Caco-2 (cell line): ENCODE measurements at regions of chr20 and their contacts with region 1.

Region 1: DNA sequence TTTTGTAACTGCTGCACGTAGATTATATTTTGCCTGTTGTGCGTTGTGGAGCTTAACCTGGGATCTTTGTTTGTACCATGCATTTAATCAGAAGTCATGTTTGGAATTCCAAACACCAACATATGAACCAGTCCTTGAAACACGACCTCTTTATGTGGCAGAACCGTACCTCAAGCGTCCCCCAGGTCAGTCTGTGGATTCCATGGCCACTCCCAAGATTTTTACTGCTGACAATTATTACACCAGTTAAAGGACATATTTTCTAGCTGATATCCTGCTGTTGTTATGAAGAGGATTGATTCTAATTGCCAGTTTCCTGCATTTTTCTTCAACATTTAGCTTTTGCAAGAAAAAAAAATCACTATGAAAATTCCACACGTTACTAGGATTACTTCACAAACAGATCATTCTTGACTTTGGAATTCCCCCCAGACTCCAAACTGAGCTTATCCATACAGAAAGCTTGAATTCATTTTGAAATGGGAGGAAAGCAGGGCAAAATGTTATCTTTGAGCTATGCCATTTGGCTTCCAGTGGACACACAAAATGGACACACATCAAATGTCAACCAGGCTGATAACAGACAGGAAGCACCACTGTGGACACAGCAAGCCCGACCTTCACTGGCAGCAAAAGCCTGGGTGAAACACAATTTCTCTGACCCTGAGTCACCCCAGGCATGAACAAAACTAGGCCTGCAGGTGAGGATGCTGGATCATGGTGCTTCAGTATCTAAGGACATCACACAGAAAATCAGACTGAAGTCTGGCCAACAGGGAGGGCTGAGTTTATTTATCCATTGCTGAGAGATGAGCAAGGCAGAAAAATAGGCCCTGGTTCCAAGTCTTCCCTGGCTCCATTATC is 542.9 kb upstream of the JAG1 start:
- DNase-seq: peak; percentile 58 to 86
- H3K4me3 ChIP-seq: no peak overlapping the region
- H3K4me3 Mint-ChIP-seq: peak overlapping the region; percentile 36
- H3K27ac Mint-ChIP-seq: peak overlapping the region; percentile 74
- H3K4me1 ChIP-seq: peaks cover 53% of the 10 kb centered on the region
- H3K4me1 Mint-ChIP-seq: peaks cover 38% of the 10 kb centered on the region
- H3K27me3 ChIP-seq: no peaks in the 10 kb centered on the region
- H3K27me3 Mint-ChIP-seq: no peaks in the 10 kb centered on the region
- CTCF ChIP-seq: no peak

Region 2: GRCh38 chr20:9581509-9581908 is 1635.2 kb before region 1 on chr20:
- CTCF ChIA-PET with region 1: no interaction called
- POLR2A ChIA-PET with region 1: no interaction called
- intact Hi-C with region 1: no loop called
- DNase-seq: no peak
- H3K4me3 ChIP-seq: no peak overlapping the region
- H3K4me3 Mint-ChIP-seq: no peak overlapping the region
- H3K27ac Mint-ChIP-seq: no peak overlapping the region
- H3K4me1 ChIP-seq: no peaks in the 10 kb centered on the region
- H3K4me1 Mint-ChIP-seq: no peaks in the 10 kb centered on the region
- H3K27me3 ChIP-seq: no peaks in the 10 kb centered on the region; the same call in 1 of the 2 replicates
- H3K27me3 Mint-ChIP-seq: peaks cover 10% of the 10 kb centered on the region
- CTCF ChIP-seq: no peak

Region 3: DNA sequence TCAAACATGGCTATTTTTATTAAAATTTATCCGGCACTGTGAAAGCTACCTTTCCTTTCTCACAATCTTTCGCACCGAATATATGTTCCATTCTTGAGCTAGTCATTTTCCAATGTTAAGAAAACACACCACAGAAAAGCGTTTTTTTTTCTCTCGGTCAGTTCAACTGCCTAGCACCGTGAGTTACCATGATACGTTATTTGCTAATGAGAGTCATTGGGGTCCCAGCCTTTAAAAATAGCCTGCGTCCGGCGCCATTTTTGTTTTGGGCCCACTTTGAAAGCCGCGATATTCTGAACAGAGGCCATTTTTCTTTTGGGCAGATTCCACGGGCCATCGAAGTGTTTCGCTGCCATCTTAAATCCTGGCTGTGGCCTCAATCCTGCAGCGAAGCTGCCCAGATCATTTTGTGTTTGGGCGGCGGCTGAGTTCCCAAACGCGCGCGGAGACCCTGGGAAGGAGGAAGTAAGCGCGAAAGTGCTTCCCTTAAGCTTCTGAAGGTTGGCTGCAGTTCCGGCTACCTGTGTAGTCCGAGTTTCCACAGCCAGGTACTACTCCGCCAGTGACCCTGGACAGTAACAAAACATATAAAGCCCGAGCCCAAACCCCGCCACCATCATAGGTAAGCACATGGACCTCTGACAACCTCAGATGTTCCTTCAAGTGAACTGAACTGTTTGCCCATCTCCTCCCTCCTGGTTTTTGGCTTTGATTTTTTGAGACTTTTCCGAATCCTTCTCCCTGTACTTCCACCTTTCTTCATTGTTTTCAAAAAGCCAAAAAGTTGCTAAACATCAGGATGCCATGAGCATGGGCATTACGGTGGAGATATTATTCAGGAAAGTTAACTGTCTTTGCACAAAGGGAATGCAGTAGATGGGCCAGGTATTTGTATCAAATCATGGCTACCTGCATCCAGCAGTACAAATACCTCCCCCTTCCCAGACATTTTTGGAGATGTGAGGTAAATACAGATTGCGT is 781.6 kb before region 1 on chr20 and contains the start of gene SLX4IP:
- CTCF ChIA-PET with region 1: no interaction called
- POLR2A ChIA-PET with region 1: no interaction called
- intact Hi-C with region 1: loop called (anchors 5 kb)
- DNase-seq: peak; percentile 94 to 97
- H3K4me3 ChIP-seq: peak within 1 kb of the TSS; percentile 98
- H3K4me3 Mint-ChIP-seq: peak within 1 kb of the TSS; percentile 99
- H3K27ac Mint-ChIP-seq: peak within 1 kb of the TSS; percentile 97
- H3K4me1 ChIP-seq: peaks cover 3% of the 10 kb centered on the region; the same call in 1 of the 2 replicates
- H3K4me1 Mint-ChIP-seq: peaks cover 10% of the 10 kb centered on the region
- H3K27me3 ChIP-seq: no peaks in the 10 kb centered on the region
- H3K27me3 Mint-ChIP-seq: no peaks in the 10 kb centered on the region
- CTCF ChIP-seq: no peak
- total RNA-seq, gene SLX4IP: 8.5 and 8.8 TPM in 2 replicates

Region 4: GRCh38 chr20:10848810-10849370 is 367.8 kb before region 1 on chr20:
- CTCF ChIA-PET with region 1: no interaction called
- POLR2A ChIA-PET with region 1: no interaction called
- intact Hi-C with region 1: loop called (anchors 5 kb)
- DNase-seq: peak; percentile 69 to 79
- H3K4me3 ChIP-seq: no peak overlapping the region
- H3K4me3 Mint-ChIP-seq: peak overlapping the region; percentile 9
- H3K27ac Mint-ChIP-seq: peak overlapping the region; percentile 66
- H3K4me1 ChIP-seq: peaks cover 20% of the 10 kb centered on the region
- H3K4me1 Mint-ChIP-seq: peaks cover 39% of the 10 kb centered on the region
- H3K27me3 ChIP-seq: no peaks in the 10 kb centered on the region
- H3K27me3 Mint-ChIP-seq: no peaks in the 10 kb centered on the region
- CTCF ChIP-seq: no peak

Region 5: DNA sequence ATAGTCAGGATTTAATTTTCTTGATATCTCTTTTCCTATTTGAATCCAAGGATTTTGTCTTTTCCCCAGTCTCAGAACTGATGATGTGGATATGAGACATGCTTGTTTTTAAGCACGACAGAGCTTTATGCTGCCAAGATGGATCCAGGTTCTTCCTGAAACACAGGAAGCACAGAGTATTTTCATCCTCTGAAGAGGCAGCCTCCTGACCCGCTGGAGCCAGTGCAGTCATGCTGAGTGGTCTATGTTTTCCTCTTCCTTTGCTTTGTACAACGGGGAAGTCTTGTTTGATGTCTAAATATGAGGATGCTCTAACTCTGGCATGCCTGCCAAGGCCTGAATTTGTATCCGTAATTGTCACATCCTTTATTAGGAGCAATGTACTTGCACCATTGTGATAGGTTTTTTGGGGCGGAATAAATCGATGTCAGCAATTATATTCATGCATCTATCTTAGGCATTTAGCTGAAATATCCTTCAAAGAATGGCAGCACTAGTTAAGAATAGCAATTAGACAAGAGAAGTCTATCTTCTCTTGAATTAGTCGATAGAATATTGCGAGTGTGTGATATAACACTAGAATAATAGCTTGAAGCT is 135.8 kb before region 1 on chr20:
- CTCF ChIA-PET with region 1: no interaction called
- POLR2A ChIA-PET with region 1: no interaction called
- intact Hi-C with region 1: no loop called
- DNase-seq: no peak
- H3K4me3 ChIP-seq: no peak overlapping the region
- H3K4me3 Mint-ChIP-seq: no peak overlapping the region
- H3K27ac Mint-ChIP-seq: no peak overlapping the region
- H3K4me1 ChIP-seq: no peaks in the 10 kb centered on the region
- H3K4me1 Mint-ChIP-seq: peaks cover 6% of the 10 kb centered on the region
- H3K27me3 ChIP-seq: no peaks in the 10 kb centered on the region
- H3K27me3 Mint-ChIP-seq: no peaks in the 10 kb centered on the region
- CTCF ChIP-seq: no peak

Region 6: GRCh38 chr20:11204926-11205768 is 11.5 kb before region 1 on chr20:
- CTCF ChIA-PET with region 1: interaction called, 13 read pairs
- POLR2A ChIA-PET with region 1: no interaction called
- intact Hi-C with region 1: no loop called
- DNase-seq: peak; percentile 75 to 76
- H3K4me3 ChIP-seq: no peak overlapping the region
- H3K4me3 Mint-ChIP-seq: no peak overlapping the region
- H3K27ac Mint-ChIP-seq: peak overlapping the region; percentile 10
- H3K4me1 ChIP-seq: peaks cover 38% of the 10 kb centered on the region
- H3K4me1 Mint-ChIP-seq: peaks cover 20% of the 10 kb centered on the region
- H3K27me3 ChIP-seq: no peaks in the 10 kb centered on the region
- H3K27me3 Mint-ChIP-seq: no peaks in the 10 kb centered on the region
- CTCF ChIP-seq: peak; percentile 75 to 94

Region 7: DNA sequence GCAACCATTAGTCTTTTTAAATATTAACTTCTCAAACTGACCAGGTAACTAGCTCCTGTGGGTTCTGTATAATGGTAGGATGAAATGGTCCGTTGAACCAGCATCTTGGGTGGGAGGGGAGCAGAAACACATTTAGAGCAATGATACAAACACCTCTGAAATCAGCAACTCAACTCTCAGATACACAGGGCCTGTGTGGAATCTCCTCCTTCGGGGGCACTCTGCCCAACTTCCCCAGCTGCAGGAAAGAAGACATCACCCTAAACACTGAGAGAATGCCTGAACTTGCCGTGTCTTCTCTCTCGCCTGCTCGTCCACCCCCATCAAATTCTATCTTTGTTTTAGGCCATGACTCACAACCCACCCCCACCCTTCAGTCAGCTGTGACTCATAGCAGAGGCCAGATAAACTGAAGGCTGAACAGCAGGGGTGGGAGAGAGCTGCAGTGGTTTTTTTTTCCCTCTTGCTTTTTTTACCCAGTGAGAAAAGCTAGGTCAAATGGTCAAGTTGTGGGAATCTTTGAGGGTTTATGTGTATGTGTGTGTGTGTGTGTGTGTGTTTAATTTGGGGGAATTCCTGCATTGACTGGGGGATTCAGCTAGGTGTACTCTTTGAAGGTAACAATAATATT is 50.6 kb after region 1 on chr20:
- CTCF ChIA-PET with region 1: interaction called, 5 read pairs
- POLR2A ChIA-PET with region 1: no interaction called
- intact Hi-C with region 1: loop called (anchors 2 kb)
- DNase-seq: peak; percentile 44 to 80
- H3K4me3 ChIP-seq: no peak overlapping the region
- H3K4me3 Mint-ChIP-seq: peak overlapping the region; percentile 56
- H3K27ac Mint-ChIP-seq: peak overlapping the region; percentile 79
- H3K4me1 ChIP-seq: peaks cover 48% of the 10 kb centered on the region
- H3K4me1 Mint-ChIP-seq: peaks cover 52% of the 10 kb centered on the region
- H3K27me3 ChIP-seq: no peaks in the 10 kb centered on the region
- H3K27me3 Mint-ChIP-seq: no peaks in the 10 kb centered on the region
- CTCF ChIP-seq: no peak